ENCODE measurements at regions of chr12 and their contacts with region 1.

Region 1: DNA sequence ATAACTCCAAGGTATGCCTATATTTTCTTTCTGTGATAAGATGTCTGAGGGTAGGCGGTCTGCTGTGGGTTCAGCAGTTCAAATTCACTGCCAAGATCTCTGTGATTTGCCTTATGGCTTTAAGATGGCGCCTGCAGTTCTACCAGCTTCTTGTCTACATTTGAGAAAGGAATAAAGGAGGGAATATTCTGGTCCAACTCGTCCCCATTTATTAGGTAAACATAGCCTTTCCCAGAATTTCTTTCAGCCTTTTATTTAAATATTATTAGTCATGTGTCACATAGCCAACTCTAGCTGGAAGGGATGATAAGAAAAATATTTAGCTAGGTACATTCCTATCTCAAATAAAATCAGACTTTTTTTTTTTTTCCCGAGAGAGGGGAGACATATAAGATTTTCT is 48.8 kb downstream of the KCNJ8 start:
- DNase-seq: no peak
- H3K4me3 ChIP-seq: no peak overlapping the region
- H3K4me3 Mint-ChIP-seq: no peak overlapping the region
- H3K27ac Mint-ChIP-seq: no peak overlapping the region
- H3K4me1 ChIP-seq: 0 out of 2 replicates have a peak, but pooled peaks cover 7% of the 10 kb centered on the region
- H3K4me1 Mint-ChIP-seq: no peaks in the 10 kb centered on the region
- H3K27me3 ChIP-seq: no peaks in the 10 kb centered on the region
- H3K27me3 Mint-ChIP-seq: no peaks in the 10 kb centered on the region
- CTCF ChIP-seq: no peak

Region 2: GRCh38 chr12:21054334-21054733 is 671.4 kb before region 1 on chr12:
- CTCF ChIA-PET with region 1: no interaction called
- POLR2A ChIA-PET with region 1: no interaction called
- intact Hi-C with region 1: no loop called
- DNase-seq: no peak
- H3K4me3 ChIP-seq: no peak overlapping the region
- H3K4me3 Mint-ChIP-seq: no peak overlapping the region
- H3K27ac Mint-ChIP-seq: no peak overlapping the region
- H3K4me1 ChIP-seq: no peaks in the 10 kb centered on the region
- H3K4me1 Mint-ChIP-seq: no peaks in the 10 kb centered on the region
- H3K27me3 ChIP-seq: no peaks in the 10 kb centered on the region
- H3K27me3 Mint-ChIP-seq: peaks cover 3% of the 10 kb centered on the region
- CTCF ChIP-seq: no peak

Region 3: DNA sequence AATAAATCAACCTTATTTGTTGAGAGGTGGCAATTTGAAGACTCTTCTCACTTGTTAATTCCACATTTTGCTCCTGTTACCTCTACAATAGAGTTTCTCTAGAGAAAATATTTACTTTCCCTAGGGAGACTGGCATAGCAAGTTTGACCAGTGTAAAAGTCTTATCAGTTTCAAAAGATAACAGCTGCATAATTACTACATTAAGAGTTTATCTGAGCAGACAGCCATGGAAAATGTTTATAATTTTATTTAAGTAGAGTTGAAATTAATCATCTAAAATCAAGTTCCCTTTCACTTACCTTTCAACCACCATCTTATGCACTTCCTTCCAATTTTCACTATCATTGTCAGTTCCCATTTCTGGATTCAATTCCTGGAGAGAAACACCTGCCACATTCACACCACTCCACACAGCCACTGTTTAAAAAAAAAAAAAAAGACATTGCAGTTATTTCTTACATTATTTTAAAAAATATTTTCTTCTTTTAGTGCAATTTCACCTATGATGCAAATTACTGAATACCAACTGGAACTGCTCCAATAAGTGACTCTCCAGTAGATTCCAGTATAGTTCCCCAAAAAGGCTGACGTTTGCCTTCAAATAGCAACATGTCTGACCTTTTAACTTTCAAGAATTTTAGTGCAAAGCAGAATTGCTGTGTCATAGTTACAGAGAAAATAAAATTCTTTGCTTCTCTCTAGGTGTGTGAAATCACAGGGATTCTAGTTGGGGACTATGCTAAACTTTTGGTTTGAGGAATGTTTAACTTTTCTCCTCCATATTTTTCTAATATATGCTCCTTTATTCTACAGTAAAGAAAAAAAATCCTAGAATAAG is 87.5 kb before region 1 on chr12:
- CTCF ChIA-PET with region 1: no interaction called
- POLR2A ChIA-PET with region 1: no interaction called
- intact Hi-C with region 1: no loop called
- DNase-seq: peak in 1 of 2 experiments; percentile 67
- H3K4me3 ChIP-seq: no peak overlapping the region
- H3K4me3 Mint-ChIP-seq: peak overlapping the region; percentile 49
- H3K27ac Mint-ChIP-seq: peak overlapping the region; percentile 54
- H3K4me1 ChIP-seq: peaks cover 57% of the 10 kb centered on the region
- H3K4me1 Mint-ChIP-seq: peaks cover 41% of the 10 kb centered on the region
- H3K27me3 ChIP-seq: no peaks in the 10 kb centered on the region
- H3K27me3 Mint-ChIP-seq: no peaks in the 10 kb centered on the region
- CTCF ChIP-seq: no peak

Region 4: GRCh38 chr12:21818627-21819026 is 92.9 kb after region 1 on chr12:
- CTCF ChIA-PET with region 1: no interaction called
- POLR2A ChIA-PET with region 1: no interaction called
- intact Hi-C with region 1: no loop called
- DNase-seq: peak in 1 of 2 experiments; percentile 57
- H3K4me3 ChIP-seq: no peak overlapping the region
- H3K4me3 Mint-ChIP-seq: peak overlapping the region; percentile 61
- H3K27ac Mint-ChIP-seq: peak overlapping the region; percentile 94
- H3K4me1 ChIP-seq: peaks cover 78% of the 10 kb centered on the region
- H3K4me1 Mint-ChIP-seq: peaks cover 55% of the 10 kb centered on the region
- H3K27me3 ChIP-seq: no peaks in the 10 kb centered on the region
- H3K27me3 Mint-ChIP-seq: no peaks in the 10 kb centered on the region
- CTCF ChIP-seq: no peak

Region 5: DNA sequence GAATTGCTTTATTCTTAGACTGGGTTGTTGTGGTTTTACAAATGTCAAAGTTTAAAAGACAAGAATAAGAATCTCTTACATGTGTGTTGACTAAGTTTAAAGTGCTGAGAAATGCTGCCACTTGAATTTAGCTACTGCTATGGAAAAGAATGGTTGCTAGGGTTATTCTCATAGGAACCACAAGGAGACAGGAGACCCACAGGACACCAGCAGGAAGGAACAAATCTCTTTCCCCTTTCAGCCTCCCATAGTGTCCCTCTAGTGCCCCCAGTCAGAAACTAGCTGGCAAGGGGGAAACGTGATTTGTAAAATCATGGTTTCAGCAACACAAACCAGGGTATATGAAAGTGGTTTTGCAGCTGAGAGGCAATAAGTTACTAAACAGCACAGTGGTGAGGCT is 506.1 kb after region 1 on chr12:
- CTCF ChIA-PET with region 1: no interaction called
- POLR2A ChIA-PET with region 1: no interaction called
- intact Hi-C with region 1: loop called (anchors 10 kb)
- DNase-seq: no peak
- H3K4me3 ChIP-seq: no peak overlapping the region
- H3K4me3 Mint-ChIP-seq: no peak overlapping the region
- H3K27ac Mint-ChIP-seq: no peak overlapping the region
- H3K4me1 ChIP-seq: no peaks in the 10 kb centered on the region
- H3K4me1 Mint-ChIP-seq: no peaks in the 10 kb centered on the region
- H3K27me3 ChIP-seq: no peaks in the 10 kb centered on the region; the same call in 1 of the 2 replicates
- H3K27me3 Mint-ChIP-seq: peaks cover 12% of the 10 kb centered on the region
- CTCF ChIP-seq: peak in 1 of 2 experiments; percentile 27

Measured in Caco-2 (cell line).